Ascending aorta (tissue), 2 donors: ENCODE measurements at regions of chr18 and their contacts with region 1.

Region 1: DNA sequence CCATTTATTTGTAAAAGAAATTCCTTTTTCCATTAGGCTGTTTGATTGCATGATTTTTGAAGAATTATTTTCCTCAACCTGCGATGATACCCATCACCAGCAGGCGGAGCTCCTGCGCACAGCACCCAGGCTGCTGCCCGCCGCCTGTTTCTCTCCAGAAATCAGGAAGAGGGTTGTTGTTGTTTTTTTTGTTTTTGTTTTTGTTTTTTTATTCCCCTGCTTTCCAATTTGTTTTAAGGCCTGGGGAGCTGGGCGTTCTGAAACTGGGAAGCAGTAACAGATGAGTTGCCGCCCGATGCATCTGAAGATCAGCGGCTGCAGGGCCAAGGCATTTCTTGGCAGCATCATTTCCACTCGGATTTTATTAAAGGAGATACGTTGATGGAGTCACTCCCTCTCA is 132.1 kb downstream of the MBP start:
- DNase-seq: no peak
- H3K4me3 ChIP-seq: peak overlapping the region in 1 of 2 donors; percentile 54
- H3K27ac ChIP-seq: no peak overlapping the region
- H3K4me1 ChIP-seq: no peaks in the 10 kb centered on the region
- H3K27me3 ChIP-seq: no peaks in the 10 kb centered on the region
- CTCF ChIP-seq: peak; percentile 83 to 98 (median 97)

Region 2: GRCh38 chr18:77054606-77055428 is 54.3 kb after region 1 on chr18:
- intact Hi-C with region 1: loop called (anchors 2 kb)
- DNase-seq: peak; percentile 69 to 87
- H3K4me3 ChIP-seq: no peak overlapping the region
- H3K27ac ChIP-seq: peak overlapping the region; percentile 60 to 66
- H3K4me1 ChIP-seq: peaks cover 3 to 9% of the 10 kb centered on the region in 2 donors
- H3K27me3 ChIP-seq: no peaks in the 10 kb centered on the region
- CTCF ChIP-seq: peak; percentile 42 to 61 (median 61)

Region 3: DNA sequence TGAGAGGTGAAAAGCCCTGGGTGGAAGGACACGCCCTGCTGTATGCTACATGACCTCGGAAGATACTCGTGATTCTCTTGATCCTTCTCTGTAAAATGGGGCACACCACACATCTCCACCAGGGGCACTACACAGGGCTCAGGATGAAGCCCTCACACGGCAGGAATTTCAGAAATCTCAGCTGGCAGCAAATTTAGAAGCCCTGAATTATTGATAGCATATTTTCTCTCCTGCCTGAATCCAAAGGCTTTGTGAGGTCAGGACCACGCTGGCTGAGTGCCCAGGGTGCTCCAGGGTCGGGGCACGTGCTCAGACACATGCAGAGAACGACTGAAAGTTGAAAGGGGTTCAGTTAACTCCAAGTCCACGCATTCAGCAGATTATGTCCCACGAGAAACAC is 207.0 kb after region 1 on chr18:
- intact Hi-C with region 1: loop called (anchors 1 kb)
- DNase-seq: peak; percentile 35 to 82
- H3K4me3 ChIP-seq: no peak overlapping the region
- H3K27ac ChIP-seq: peak overlapping the region; percentile 70 to 75
- H3K4me1 ChIP-seq: peaks cover 0 to 15% of the 10 kb centered on the region in 2 donors
- H3K27me3 ChIP-seq: no peaks in the 10 kb centered on the region
- CTCF ChIP-seq: peak; percentile 57 to 68 (median 65)